Heart left ventricle (tissue), 16 donors: ENCODE measurements at regions of chr13 and their contacts with region 1.

Region 1: GRCh38 chr13:19089315-19089714 is 92.3 kb downstream of the TUBA3C start:
- DNase-seq: no peak
- ATAC-seq: peak in 1 of 4 donors; percentile 27
- H3K4me3 ChIP-seq: no peak overlapping the region
- H3K27ac ChIP-seq: no peak overlapping the region
- H3K4me1 ChIP-seq: no peaks in the 10 kb centered on the region
- H3K27me3 ChIP-seq: peaks cover 0 to 5% (median 0%) of the 10 kb centered on the region in 9 donors
- CTCF ChIP-seq: peak in 5 of 12 donors; percentile 9 to 28 (median 23)
- POLR2A ChIP-seq: no peak

Region 2: GRCh38 chr13:18921063-18921462 is 168.3 kb before region 1 on chr13:
- intact Hi-C with region 1: no loop called
- DNase-seq: no peak
- ATAC-seq: no peak
- H3K4me3 ChIP-seq: no peak overlapping the region
- H3K27ac ChIP-seq: no peak overlapping the region
- H3K4me1 ChIP-seq: no peaks in the 10 kb centered on the region
- H3K27me3 ChIP-seq: peaks cover 0 to 4% (median 0%) of the 10 kb centered on the region in 9 donors
- CTCF ChIP-seq: no peak
- POLR2A ChIP-seq: no peak

Region 3: GRCh38 chr13:19072543-19072942 is 16.8 kb before region 1 on chr13:
- intact Hi-C with region 1: loop called in 1 of 10 experiments (anchors 2 kb)
- DNase-seq: peak in 1 of 5 donors; percentile 38
- ATAC-seq: no peak
- H3K4me3 ChIP-seq: no peak overlapping the region
- H3K27ac ChIP-seq: no peak overlapping the region
- H3K4me1 ChIP-seq: no peaks in the 10 kb centered on the region
- H3K27me3 ChIP-seq: no peaks in the 10 kb centered on the region
- CTCF ChIP-seq: no peak
- POLR2A ChIP-seq: no peak